IMR-90 (cell line): ENCODE measurements at regions of chr2 and their contacts with region 1.

Region 1: GRCh38 chr2:120231974-120232635 is 8.9 kb upstream of the TMEM185B start:
- DNase-seq: peak; percentile 50
- ATAC-seq: peak; percentile 68
- H3K4me3 ChIP-seq: peak overlapping the region; percentile 39
- H3K27ac ChIP-seq: no peak overlapping the region
- H3K4me1 ChIP-seq: peaks cover 2% of the 10 kb centered on the region; the same call in 1 of the 2 replicates
- H3K27me3 ChIP-seq: peaks cover 4% of the 10 kb centered on the region; the same call in 1 of the 2 replicates
- CTCF ChIP-seq: no peak
- POLR2A ChIP-seq: no peak
- RAD21 ChIP-seq: no peak

Region 2: GRCh38 chr2:119234377-119235019 is 997.6 kb before region 1 on chr2:
- CTCF ChIA-PET with region 1: no interaction called
- POLR2A ChIA-PET with region 1: no interaction called
- dilution Hi-C with region 1: no loop called
- in situ Hi-C with region 1: loop called (anchors 25 kb)
- intact Hi-C with region 1: no loop called
- DNase-seq: peak; percentile 27
- ATAC-seq: no peak
- H3K4me3 ChIP-seq: no peak overlapping the region
- H3K27ac ChIP-seq: no peak overlapping the region
- H3K4me1 ChIP-seq: peaks cover 29% of the 10 kb centered on the region
- H3K27me3 ChIP-seq: no peaks in the 10 kb centered on the region
- CTCF ChIP-seq: peak; percentile 40
- POLR2A ChIP-seq: no peak
- RAD21 ChIP-seq: peak; percentile 42

Region 3: GRCh38 chr2:119888680-119889079 is 343.4 kb before region 1 on chr2:
- CTCF ChIA-PET with region 1: no interaction called
- POLR2A ChIA-PET with region 1: no interaction called
- dilution Hi-C with region 1: no loop called
- in situ Hi-C with region 1: no loop called
- intact Hi-C with region 1: no loop called
- DNase-seq: peak; percentile 92
- ATAC-seq: peak; percentile 92
- H3K4me3 ChIP-seq: no peak overlapping the region
- H3K27ac ChIP-seq: no peak overlapping the region
- H3K4me1 ChIP-seq: peaks cover 2% of the 10 kb centered on the region; the same call in 1 of the 2 replicates
- H3K27me3 ChIP-seq: no peaks in the 10 kb centered on the region
- CTCF ChIP-seq: no peak
- POLR2A ChIP-seq: no peak
- RAD21 ChIP-seq: no peak